Posterior vena cava (tissue), 2 donors: ENCODE measurements at regions of chr12 and their contacts with region 1.

Region 1: GRCh38 chr12:3275171-3276041 is 198.2 kb downstream of the TSPAN9 start:
- DNase-seq: peak; percentile 92

Region 2: GRCh38 chr12:3135522-3136461 is 139.6 kb before region 1 on chr12:
- intact Hi-C with region 1: loop called (anchors 2 kb)
- DNase-seq: peak; percentile 72

Region 3: DNA sequence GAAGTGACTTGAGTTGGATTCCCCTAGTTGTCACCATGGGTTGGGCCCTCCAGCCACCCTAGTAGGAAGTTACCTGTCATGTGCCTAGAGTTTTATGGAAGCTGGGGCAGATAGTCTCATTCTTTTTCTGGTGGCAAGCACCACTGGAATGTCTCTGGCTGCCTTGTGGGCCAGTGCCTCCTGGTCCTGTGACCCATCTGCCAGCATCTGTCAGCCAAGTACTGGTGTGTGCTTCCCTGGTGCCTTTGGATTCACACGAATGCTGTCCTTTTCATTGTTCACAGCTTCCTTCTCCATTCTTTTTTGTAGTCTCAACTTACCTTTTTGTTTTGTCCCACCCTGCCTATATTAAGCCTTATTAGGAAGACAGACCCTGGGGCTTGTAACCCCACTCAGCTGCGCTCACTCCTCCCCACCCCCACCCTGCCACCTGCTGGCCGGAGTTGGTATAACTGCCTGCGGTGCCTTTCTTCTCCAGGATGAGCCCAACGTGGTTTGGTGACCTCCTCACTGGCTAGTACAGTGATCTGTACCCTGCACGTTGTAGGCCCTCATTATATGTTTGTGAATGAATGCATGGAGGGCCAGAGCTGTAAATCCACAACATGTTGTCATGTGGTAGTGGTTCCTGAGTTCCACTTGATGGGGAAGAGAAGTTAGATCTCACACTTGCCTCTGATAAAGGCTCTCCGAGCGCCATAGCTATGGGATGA is 72.5 kb before region 1 on chr12:
- intact Hi-C with region 1: no loop called
- DNase-seq: no peak

Region 4: DNA sequence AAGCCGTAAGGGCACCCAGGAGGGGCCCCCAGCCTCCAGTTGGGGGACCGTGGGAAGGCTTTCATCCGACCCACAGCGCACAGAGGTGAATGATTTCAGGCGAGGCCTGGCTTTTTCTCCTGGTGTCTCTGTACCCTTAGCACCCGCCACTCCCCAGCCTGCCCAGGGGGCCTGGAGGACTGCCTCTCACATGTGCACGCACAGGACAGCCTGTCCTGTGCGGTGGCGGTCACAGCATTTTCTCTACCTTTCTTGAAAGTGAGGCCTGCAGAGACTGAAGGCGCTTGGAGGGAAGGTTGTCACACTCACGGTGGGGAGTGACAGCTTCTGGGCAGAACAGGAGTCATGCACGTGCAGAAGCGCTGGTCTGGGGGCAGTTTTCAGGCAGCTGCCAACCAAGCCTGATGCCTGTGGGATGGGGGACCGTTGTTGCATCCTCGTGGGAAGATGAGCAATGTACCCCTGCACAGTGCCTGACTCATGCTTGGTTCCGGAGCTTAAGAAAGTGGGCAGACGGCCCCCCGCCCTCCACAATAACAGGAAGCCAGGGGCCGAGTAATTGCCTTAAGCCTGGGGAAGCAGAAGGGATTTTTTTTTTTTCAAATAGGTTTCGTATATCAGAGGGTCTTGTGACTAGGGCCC is 50.1 kb before region 1 on chr12:
- intact Hi-C with region 1: no loop called
- DNase-seq: no peak

Region 5: GRCh38 chr12:3418609-3419390 is 143.4 kb after region 1 on chr12:
- intact Hi-C with region 1: no loop called
- DNase-seq: no peak